PC-9 (cell line): ENCODE measurements at regions of chr6 and their contacts with region 1.

Region 1: GRCh38 chr6:27753668-27754407 is 158.4 kb downstream of the OR2B2 start:
- DNase-seq: peak; percentile 66 to 81
- H3K4me3 ChIP-seq: peak overlapping the region; percentile 73
- H3K27ac ChIP-seq: no peak overlapping the region
- H3K4me1 ChIP-seq: peaks cover 8% of the 10 kb centered on the region; the same call in 1 of the 2 replicates
- H3K27me3 ChIP-seq: no peaks in the 10 kb centered on the region
- CTCF ChIP-seq: no peak

Region 2: GRCh38 chr6:27157459-27158315 is 596.2 kb before region 1 on chr6:
- CTCF ChIA-PET with region 1: interaction called, 3 read pairs
- POLR2A ChIA-PET with region 1: no interaction called
- intact Hi-C with region 1: loop called (anchors 1 kb)
- DNase-seq: peak; percentile 68 to 69
- H3K4me3 ChIP-seq: peak overlapping the region; percentile 72
- H3K27ac ChIP-seq: peak overlapping the region; percentile 57
- H3K4me1 ChIP-seq: 0 out of 2 replicates have a peak, but pooled peaks cover 8% of the 10 kb centered on the region
- H3K27me3 ChIP-seq: no peaks in the 10 kb centered on the region
- CTCF ChIP-seq: peak; percentile 39; the same call in 1 of the 2 replicates

Region 3: DNA sequence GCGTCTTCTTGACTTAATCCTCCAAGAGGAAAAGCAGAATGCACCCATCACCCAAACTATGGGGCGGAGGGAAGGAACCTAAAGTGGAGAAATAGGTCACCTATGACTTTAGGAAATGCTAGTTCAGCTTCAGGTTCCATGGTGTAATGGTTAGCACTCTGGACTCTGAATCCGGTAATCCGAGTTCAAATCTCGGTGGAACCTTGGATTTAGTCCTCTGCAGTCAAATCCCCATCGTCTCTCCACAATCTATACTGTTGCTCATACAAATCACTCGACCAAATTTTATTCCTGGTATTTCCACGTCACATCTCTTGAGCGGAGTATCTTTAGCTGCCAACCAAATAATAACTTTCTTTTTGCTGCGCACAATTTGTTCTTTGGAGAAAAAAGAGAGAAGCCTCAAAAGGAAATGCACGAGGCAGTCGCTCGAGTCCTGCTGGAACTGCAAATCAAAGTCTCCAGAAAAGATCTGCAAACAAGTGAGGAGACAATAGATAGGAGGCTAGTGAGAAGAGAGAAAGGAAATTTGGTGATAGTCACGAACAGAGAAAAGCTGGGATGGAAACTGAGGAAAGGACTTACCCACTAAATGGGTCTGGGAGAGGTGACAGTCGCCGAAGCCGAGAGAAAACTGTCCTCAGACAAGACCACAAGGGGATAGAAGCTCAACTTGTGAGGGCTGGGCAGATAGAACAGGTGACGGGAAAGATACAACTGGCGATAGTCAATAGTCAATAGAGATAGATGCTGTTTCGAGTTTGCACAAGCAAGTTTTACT is 458.3 kb before region 1 on chr6:
- CTCF ChIA-PET with region 1: interaction called, 22 read pairs
- POLR2A ChIA-PET with region 1: no interaction called
- intact Hi-C with region 1: loop called (anchors 1 kb)
- DNase-seq: peak; percentile 49 to 73
- H3K4me3 ChIP-seq: peak overlapping the region; percentile 84
- H3K27ac ChIP-seq: no peak overlapping the region
- H3K4me1 ChIP-seq: peaks cover 27% of the 10 kb centered on the region
- H3K27me3 ChIP-seq: no peaks in the 10 kb centered on the region
- CTCF ChIP-seq: no peak

Region 4: DNA sequence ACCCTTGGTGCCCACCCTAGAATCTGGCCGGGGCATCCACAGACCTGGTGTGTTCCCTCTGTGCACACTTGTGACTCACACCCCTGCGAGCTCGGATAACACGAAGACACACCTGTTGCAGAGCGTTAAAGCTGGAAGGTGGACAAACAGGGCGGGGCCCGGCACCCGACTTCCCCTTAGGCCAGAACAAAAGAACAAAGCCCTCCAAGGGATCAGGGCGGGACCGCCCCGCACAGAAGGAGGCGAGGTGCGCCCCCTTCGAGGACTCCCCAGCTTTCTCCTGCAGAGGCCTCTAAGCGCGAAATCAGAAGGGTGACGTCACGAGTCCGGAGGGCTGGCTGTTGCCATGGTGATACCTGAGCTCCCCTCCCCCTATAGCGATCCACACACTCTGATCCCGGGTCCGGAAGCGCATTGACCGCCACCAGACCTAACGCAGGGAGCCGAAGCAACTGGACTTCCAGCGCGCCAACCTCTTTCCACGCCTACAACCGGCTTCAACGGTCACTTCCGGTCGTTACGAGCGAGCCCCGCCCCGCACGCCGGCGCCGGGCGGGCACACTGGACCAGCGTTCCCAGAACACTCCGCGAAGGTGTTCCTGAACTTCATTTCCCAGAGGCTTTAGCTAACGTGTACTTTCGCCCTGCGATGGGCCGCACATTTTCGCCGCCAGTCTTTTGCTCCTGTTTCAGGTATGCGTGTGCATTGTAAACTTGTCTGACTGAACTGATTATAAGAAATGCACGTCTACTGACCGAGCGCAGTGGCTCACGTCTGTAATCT is 281.0 kb before region 1 on chr6 and contains the start of gene ZNF184:
- CTCF ChIA-PET with region 1: no interaction called
- POLR2A ChIA-PET with region 1: interaction called, 7 read pairs
- intact Hi-C with region 1: loop called (anchors 2 kb)
- DNase-seq: peak; percentile 94 to 98
- H3K4me3 ChIP-seq: peak within 1 kb of the TSS; percentile 91
- H3K27ac ChIP-seq: peak within 1 kb of the TSS; percentile 79
- H3K4me1 ChIP-seq: peaks cover 12% of the 10 kb centered on the region; the same call in 1 of the 2 replicates
- H3K27me3 ChIP-seq: no peaks in the 10 kb centered on the region
- CTCF ChIP-seq: peak; percentile 19; the same call in 1 of the 2 replicates
- total RNA-seq, gene ZNF184: 7.0 and 8.8 TPM in 2 replicates

Region 5: DNA sequence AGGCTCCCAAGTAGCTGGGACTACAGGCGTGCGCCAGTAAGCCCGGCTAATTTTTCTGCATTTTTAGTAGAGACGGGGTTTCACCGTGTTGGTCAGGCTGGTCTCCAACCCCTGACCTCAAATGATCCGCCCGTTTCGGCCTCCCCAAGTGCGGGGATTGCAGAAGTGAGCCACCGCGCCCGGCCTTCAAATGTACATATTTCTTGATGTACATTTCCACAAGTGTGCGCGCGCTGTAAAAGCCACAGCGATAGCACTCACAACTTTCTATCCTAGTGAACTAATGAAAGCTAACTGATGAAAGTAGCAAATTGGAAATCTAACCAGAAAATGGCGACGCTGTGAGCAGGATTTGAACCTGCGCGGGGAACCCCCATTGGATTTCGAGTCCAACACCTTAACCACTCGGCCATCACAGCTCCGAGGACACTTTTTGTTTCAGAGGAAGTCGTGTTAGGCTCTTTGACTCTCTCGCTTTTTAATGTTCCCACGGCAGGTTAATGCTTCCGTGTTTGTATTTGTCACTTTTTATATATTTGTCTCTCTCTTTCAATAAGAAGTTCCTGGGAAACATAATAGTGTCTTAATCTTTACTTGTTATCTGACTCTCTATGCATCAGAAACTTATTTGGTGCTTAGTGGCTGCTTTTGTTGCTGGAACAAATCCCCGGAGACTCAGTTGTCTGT is 81.6 kb before region 1 on chr6:
- CTCF ChIA-PET with region 1: interaction called, 3 read pairs
- POLR2A ChIA-PET with region 1: no interaction called
- intact Hi-C with region 1: loop called (anchors 1 kb)
- DNase-seq: peak; percentile 83
- H3K4me3 ChIP-seq: peak overlapping the region; percentile 85
- H3K27ac ChIP-seq: peak overlapping the region; percentile 58
- H3K4me1 ChIP-seq: peaks cover 32% of the 10 kb centered on the region
- H3K27me3 ChIP-seq: no peaks in the 10 kb centered on the region
- CTCF ChIP-seq: no peak

Region 6: DNA sequence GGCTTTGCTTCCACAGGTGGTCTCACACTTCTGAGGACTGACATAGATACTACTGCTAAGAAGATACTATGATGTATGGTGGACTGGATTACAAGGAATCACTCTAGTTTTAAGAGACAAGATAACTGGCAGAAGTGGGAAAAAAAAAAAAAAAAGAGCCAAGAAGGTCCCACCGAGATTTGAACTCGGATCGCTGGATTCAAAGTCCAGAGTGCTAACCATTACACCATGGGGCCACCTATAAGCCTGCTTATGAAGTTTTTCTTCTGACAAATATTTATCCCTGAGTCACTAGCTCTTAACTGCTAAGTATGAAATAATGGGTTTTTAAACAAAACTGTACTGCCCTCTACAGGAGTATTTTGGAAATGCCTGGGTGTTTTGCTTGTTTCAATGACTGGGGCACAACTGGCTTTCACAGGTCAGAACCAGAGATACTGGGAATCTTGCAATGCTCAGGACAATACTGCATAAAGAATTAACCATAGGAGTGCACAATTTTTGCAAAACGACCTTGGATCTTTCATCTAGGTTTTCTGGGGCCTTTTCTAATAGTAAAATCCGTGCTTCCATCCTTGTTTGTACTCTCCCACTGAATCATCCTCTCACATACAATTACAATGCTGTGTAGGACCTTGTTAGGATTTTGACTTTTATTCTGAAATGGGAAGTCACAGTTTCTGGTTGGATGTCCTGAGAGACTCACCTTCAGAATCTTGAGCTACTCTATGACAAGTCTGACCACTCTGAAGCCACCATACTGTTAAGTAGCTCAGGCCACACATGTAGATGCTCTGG is 42.1 kb after region 1 on chr6:
- CTCF ChIA-PET with region 1: no interaction called
- POLR2A ChIA-PET with region 1: interaction called, 3 read pairs
- intact Hi-C with region 1: loop called (anchors 1 kb)
- DNase-seq: peak; percentile 70 to 87
- H3K4me3 ChIP-seq: no peak overlapping the region; the same call in 1 of the 2 replicates
- H3K27ac ChIP-seq: no peak overlapping the region
- H3K4me1 ChIP-seq: peaks cover 7% of the 10 kb centered on the region; the same call in 1 of the 2 replicates
- H3K27me3 ChIP-seq: no peaks in the 10 kb centered on the region
- CTCF ChIP-seq: peak; percentile 89